ENCODE measurements at regions of chr1 and their contacts with region 1.

Region 1: DNA sequence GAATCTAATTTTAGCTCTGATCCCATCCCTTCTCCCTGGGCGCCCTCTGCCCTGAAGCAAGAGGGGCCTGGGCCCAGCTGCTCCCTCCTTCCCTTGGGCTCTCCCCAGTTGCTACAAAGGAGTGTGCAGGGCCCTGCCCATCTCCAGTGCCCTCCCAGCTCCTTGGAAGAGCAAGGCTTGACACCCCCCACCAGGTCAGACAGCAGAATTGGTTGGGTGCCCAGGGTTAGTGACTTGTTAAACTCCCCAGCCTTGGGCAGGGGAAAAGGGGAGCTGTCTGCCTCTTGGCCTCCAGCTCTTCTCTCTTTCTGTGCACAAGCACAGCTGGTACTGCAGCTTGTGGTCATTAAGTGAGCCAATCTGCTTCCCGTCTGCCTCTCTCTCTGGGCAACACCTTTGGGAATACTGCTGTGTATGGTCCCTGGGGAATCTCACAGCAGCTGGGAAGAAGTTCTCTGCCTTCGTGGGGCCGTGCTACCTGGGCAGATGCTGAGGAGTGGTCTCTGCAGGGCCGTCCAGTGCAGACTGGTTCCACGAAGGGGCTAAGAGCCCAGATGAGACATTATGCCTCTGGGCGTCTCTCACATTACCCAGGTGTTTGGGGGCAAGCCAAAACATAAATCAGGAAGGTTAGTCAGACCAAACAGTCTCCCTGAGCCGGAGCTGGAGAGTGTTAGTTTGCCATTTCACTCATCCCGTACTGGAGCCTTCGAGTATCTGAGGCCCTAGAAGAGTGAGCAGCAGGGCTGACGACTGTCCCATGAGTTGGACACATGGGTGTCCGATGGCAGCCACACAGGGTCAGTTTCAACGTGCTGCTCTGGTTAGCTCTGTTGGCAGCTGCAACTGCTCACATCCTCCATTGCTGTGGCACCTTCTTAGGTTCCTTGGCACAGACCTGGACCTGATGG is 37.3 kb downstream of the TMEM53 start:
- DNase-seq: no peak
- ATAC-seq: peak; percentile 3
- H3K4me3 ChIP-seq: no peak overlapping the region
- H3K27ac ChIP-seq: peak overlapping the region; percentile 49; the same call in 2 of the 3 replicates
- H3K4me1 ChIP-seq: peaks cover 46 to 49% of the 10 kb centered on the region in 2 experiments; a peak in 4 of 5 replicates
- H3K27me3 ChIP-seq: no peaks in the 10 kb centered on the region
- CTCF ChIP-seq: no peak
- EP300 ChIP-seq: no peak
- POLR2A ChIP-seq: no peak
- RAD21 ChIP-seq: no peak

Region 2: DNA sequence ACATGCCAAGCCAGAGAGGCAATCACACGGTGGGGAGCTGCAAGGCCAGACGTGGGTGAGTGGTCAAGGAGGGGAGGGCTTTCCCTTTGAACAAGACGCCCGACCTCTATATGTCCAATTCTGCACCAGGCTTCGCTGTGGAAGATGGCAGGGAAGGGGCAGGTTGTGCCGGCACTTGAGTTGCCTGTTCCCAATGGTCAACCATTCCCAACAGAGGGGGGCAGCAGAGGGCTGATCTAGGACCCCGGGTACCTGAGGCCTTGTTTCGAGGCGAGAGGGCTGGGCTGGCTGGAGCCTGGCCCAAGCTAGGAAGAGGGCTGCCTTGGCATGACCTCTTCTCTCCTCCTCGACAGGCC is 27.6 kb before region 1 on chr1:
- CTCF ChIA-PET with region 1: no interaction called
- POLR2A ChIA-PET with region 1: interaction called, 122 read pairs
- in situ Hi-C with region 1: no loop called
- intact Hi-C with region 1: no loop called
- DNase-seq: peak; percentile 80 to 87 (median 84)
- ATAC-seq: peak; percentile 92
- H3K4me3 ChIP-seq: no peak overlapping the region
- H3K27ac ChIP-seq: no peak overlapping the region
- H3K4me1 ChIP-seq: peaks cover 21 to 26% of the 10 kb centered on the region in 2 experiments
- H3K27me3 ChIP-seq: peaks cover 0 to 5% of the 10 kb centered on the region in 2 experiments; a peak in 3 of 5 replicates
- CTCF ChIP-seq: peak; percentile 89 to 90 (median 90)
- EP300 ChIP-seq: no peak
- POLR2A ChIP-seq: no peak
- RAD21 ChIP-seq: peak; percentile 87 to 96

Region 3: DNA sequence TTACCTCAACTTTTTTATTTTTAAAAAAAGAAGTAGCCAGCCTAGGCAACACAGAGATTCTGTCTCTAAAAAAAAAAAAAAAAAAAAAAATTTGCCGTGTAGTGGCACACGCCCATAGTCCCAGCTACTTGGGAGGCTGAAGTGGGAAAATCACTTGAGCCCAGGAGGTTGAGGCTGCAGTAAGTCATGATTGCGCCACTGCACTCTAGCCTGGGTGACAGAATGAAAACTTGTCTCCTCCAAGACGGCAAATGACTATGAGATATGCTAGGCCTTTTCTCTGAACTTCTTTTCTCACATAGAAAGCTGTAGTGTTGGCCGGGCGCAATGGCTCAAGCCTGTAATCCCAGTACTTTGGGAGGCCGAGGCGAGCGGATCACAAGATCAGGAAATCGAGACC is 230.9 kb after region 1 on chr1:
- CTCF ChIA-PET with region 1: no interaction called
- POLR2A ChIA-PET with region 1: no interaction called
- in situ Hi-C with region 1: no loop called
- intact Hi-C with region 1: no loop called
- DNase-seq: no peak
- ATAC-seq: no peak
- H3K4me3 ChIP-seq: no peak overlapping the region
- H3K27ac ChIP-seq: no peak overlapping the region
- H3K4me1 ChIP-seq: peaks cover 0 to 8% of the 10 kb centered on the region in 2 experiments; a peak in 2 of 5 replicates
- H3K27me3 ChIP-seq: no peaks in the 10 kb centered on the region
- CTCF ChIP-seq: no peak
- EP300 ChIP-seq: no peak
- POLR2A ChIP-seq: no peak
- RAD21 ChIP-seq: no peak

Measured in K562 (cell line).